Mammary epithelial cell (primary cell): ENCODE measurements at regions of chr2 and their contacts with region 1.

Region 1: DNA sequence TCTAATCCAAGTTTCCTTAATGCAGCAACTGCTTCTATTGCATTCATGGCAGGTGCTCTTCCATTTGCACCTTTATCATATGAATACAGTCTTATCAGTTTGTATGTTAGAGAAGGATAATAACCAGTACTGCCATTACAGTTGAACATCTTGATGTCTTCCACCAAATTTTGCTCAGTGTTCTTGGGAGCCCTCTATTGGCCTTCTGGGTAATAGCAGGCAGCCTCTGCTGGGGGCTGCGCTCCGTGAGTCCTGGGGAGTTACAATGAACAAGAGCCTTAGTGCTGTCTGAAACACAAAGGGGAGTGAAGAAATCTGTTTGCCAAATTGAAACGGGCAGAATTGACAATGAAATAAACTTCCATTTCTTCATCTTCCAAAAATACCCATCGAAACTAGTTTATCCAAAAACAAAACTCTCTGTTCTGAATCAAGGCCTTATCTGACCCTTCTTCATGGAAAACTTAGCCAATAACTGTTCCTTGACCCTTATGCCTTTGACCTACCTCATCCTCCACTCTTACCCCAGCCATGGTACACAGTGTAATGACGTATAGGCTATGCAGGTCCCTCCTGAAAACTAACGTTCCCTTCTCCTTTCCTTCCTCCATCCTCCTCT is 79.9 kb downstream of the ALK start:
- DNase-seq: no peak
- H3K4me3 ChIP-seq: no peak overlapping the region
- H3K27ac ChIP-seq: no peak overlapping the region
- H3K4me1 ChIP-seq: no peaks in the 10 kb centered on the region
- H3K27me3 ChIP-seq: peaks cover 6% of the 10 kb centered on the region
- CTCF ChIP-seq: peak; percentile 96 to 98

Region 2: DNA sequence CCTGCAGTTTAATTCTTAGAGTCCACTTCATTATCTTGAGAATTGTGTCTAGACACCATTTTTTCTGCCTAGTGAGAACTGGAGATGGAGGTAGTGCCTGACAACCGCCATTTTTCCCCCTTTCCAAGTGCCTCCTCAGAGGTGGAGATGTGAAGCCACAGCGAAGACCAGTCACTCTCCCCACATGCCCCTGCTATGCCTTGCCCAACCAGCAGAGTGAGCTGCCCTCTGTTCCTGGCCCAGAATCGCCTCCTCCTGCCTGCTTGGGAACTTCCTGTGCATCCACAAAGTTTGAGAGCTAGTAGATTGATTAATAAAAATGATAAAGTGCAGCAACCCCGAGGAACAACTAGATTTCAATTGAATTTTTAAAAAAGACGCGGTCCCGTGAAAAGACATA is 603.0 kb before region 1 on chr2:
- CTCF ChIA-PET with region 1: no interaction called
- dilution Hi-C with region 1: no loop called
- in situ Hi-C with region 1: no loop called
- intact Hi-C with region 1: loop called (anchors 1 kb)
- DNase-seq: peak; percentile 40
- H3K4me3 ChIP-seq: no peak overlapping the region
- H3K27ac ChIP-seq: no peak overlapping the region
- H3K4me1 ChIP-seq: no peaks in the 10 kb centered on the region
- H3K27me3 ChIP-seq: no peaks in the 10 kb centered on the region
- CTCF ChIP-seq: peak; percentile 92 to 93

Region 3: DNA sequence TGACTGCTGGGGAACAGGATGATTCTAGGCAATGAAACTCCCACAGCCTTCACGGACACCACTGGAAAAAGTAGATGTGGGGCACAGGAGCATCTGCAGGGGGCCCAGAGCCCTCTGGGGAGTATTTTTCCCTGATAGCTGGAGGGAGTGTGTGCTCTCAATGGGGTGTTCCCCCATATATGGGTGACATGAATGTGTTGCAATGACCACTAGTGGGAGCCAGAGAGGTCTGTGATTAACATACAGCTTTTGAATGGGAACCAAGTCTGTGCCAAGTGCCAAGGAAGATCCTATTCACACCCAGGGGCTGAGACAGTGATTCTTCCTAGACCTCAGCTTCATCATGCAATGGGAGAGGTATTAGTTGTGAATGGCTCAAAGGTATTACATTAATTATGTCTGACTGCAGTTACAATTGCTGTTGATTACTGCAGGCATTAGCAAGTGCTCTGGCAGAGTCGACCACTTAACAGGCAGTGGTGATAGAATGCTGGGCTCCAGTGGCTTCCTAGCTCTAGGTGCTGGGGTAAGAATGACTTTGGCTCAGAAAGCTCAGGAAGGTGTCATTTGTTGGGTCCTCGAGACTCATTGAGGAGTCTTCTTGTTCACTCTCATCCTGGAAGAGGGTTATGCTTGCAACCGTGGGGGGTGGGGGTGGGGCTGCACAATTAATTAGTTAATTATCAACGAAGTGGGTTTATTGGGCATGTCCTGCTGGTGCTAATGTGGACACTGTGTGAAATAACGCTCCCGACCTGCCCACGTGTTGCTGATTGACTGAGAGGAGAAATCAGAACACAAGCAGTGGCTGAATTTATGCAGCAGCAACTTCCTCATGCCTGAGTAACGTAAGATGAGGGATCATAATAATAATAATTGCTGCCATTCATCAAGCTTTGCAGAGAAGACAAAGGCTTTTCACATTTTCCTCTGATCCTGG is 532.1 kb before region 1 on chr2:
- CTCF ChIA-PET with region 1: no interaction called
- dilution Hi-C with region 1: no loop called
- in situ Hi-C with region 1: loop called (anchors 10 to 25 kb)
- intact Hi-C with region 1: loop called (anchors 1 kb)
- DNase-seq: peak; percentile 47
- H3K4me3 ChIP-seq: no peak overlapping the region
- H3K27ac ChIP-seq: no peak overlapping the region
- H3K4me1 ChIP-seq: no peaks in the 10 kb centered on the region
- H3K27me3 ChIP-seq: peaks cover 2% of the 10 kb centered on the region
- CTCF ChIP-seq: peak; percentile 89

Region 4: DNA sequence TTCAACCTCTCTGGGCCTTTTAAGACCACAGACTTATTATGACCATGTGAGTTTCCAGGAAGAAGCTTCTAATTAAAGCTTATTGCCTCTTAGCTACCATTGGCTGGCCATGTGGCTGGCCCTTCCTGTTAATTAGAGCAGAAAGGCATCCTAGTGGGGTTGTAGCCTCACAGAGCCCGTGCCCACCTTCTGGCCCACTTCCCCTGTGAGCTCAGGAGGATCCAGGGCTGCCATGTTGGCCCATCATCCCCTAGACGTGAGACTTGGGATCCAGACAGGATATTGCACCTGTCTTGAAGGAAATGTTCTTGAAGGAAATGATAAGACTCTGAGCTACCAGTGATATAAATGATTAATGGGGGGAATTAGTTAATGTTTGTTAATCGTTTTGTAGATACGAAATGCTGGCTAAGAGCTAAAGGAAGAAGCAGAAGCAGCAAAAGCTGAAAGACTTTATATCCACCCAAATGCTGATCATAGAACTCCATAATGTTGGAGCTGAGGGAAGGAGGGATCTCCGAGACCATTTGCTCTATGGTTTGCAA is 470.8 kb before region 1 on chr2:
- CTCF ChIA-PET with region 1: interaction called, 15 read pairs
- dilution Hi-C with region 1: no loop called
- in situ Hi-C with region 1: no loop called
- intact Hi-C with region 1: no loop called
- DNase-seq: no peak
- H3K4me3 ChIP-seq: no peak overlapping the region
- H3K27ac ChIP-seq: no peak overlapping the region
- H3K4me1 ChIP-seq: no peaks in the 10 kb centered on the region
- H3K27me3 ChIP-seq: no peaks in the 10 kb centered on the region
- CTCF ChIP-seq: no peak

Region 5: GRCh38 chr2:29644949-29645348 is 196.5 kb before region 1 on chr2:
- CTCF ChIA-PET with region 1: no interaction called
- dilution Hi-C with region 1: no loop called
- in situ Hi-C with region 1: no loop called
- intact Hi-C with region 1: loop called (anchors 5 kb)
- DNase-seq: no peak
- H3K4me3 ChIP-seq: no peak overlapping the region
- H3K27ac ChIP-seq: no peak overlapping the region
- H3K4me1 ChIP-seq: peaks cover 14% of the 10 kb centered on the region
- H3K27me3 ChIP-seq: no peaks in the 10 kb centered on the region
- CTCF ChIP-seq: peak in 1 of 2 donors; percentile 23

Region 6: GRCh38 chr2:30026087-30027055 is 184.9 kb after region 1 on chr2:
- CTCF ChIA-PET with region 1: no interaction called
- dilution Hi-C with region 1: no loop called
- in situ Hi-C with region 1: no loop called
- intact Hi-C with region 1: loop called (anchors 2 kb)
- DNase-seq: peak; percentile 95
- H3K4me3 ChIP-seq: no peak overlapping the region
- H3K27ac ChIP-seq: no peak overlapping the region
- H3K4me1 ChIP-seq: peaks cover 13% of the 10 kb centered on the region
- H3K27me3 ChIP-seq: no peaks in the 10 kb centered on the region
- CTCF ChIP-seq: peak; percentile 63 to 81